Activated CD8-positive, alpha-beta memory T cell treated with anti-CD3 and anti-CD28 coated beads, Interleukin-2, amount 10 ng/mL, durations not matched to agents 7 days and 5 days (primary cell): ENCODE measurements at regions of chr17 and their contacts with region 1.

Region 1: DNA sequence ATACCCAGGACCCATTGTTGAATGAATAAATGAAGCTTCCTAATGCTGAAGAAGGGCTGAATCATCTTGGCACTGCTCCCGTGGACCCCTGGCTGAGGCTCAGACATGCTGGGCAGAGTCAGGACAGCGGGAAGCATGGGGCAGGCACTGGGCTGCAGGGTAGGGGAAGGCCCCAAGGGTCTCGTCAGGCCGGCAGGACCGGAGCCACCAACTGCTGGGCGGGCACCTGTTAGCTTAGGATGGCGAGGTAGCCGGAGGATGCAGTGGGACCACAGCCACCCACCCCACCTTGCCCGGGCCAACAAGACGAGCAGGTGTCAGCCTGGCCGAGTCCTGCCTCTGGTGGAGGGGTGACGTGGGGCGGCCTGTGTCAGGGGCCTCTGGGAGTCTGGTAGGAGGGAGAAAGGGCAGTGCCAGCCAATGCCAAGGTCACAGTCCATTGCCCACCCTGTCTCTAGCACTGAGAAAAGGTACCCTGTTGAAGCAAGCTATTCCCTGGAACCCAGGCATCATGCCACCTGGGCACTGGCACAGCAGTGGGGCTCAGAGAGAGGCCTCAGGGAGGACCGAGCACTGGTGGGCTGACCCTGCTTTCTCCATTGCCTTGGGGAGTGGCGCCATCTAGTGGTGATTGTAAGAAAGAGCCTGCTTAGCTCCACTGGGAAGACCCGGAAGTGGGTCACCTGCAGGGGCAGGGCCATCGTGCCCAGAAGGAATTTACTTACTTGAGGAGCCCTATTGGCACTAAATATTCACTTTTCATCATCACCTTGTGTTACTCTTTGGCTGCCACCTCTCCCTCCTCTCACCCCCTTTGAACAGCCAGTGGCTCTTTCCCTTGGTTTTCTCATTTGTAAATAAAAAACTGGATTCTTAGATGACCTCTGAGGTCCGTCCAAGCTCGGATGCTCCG is 3.0 kb upstream of the DLX3 start:
- DNase-seq: peak; percentile 90
- ATAC-seq: peak; percentile 93
- H3K4me3 Mint-ChIP-seq: no peak overlapping the region
- H3K27ac Mint-ChIP-seq: no peak overlapping the region
- H3K4me1 Mint-ChIP-seq: peaks cover 24% of the 10 kb centered on the region
- H3K27me3 Mint-ChIP-seq: peaks cover 71% of the 10 kb centered on the region

Region 2: GRCh38 chr17:49567871-49568694 is 430.0 kb before region 1 on chr17:
- CTCF ChIA-PET with region 1: interaction called, 52 read pairs
- DNase-seq: peak; percentile 90
- ATAC-seq: peak; percentile 61
- H3K4me3 Mint-ChIP-seq: peak overlapping the region; percentile 63
- H3K27ac Mint-ChIP-seq: no peak overlapping the region
- H3K4me1 Mint-ChIP-seq: peaks cover 38% of the 10 kb centered on the region
- H3K27me3 Mint-ChIP-seq: peaks cover 51% of the 10 kb centered on the region

Region 3: DNA sequence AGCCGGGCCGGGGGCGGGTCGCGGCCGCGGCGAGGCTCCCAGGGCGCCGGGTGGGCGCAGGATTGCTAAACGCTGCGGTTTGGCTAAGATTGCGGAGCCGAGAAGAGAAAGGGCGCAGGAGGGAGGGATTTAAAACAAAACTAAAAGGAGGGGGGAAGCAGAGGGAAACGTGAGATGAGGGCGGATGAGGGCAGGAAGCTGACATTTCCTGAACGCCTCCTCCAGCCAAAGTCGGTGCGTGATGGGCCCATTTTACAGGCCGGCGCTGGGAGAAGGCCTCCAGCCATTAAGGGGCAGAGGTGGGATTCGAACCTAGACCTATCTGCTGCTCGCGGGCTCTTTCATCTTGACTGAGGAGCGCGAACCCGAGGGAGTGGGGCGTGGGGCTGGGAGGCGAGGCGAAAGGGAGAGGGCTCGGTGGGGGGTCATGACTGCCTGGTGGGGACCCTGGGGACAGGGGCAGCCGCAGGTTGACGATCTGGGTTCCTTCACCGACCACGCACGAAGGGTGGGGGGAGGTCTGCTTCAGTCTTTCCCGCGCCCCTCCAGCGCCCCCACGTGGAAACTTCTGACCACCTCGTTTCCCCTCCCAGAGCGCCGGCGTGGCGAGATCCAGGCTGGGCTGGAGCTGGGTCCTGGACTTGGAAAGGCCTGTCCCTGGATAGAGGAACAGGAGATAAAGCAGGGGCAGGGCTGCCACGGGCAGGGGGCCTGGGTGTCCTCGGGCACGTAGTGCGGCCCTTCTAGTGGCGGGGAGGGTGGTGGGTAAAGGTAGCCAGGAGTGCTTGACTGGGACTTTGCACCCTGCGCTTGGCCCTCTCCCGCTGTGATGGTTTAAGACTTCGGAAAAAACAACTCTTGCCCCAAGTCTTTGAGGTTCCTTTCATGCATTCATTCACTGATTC is 146.4 kb before region 1 on chr17:
- CTCF ChIA-PET with region 1: interaction called, 202 read pairs
- DNase-seq: peak; percentile 75
- ATAC-seq: peak; percentile 79
- H3K4me3 Mint-ChIP-seq: peak overlapping the region; percentile 79
- H3K27ac Mint-ChIP-seq: peak overlapping the region; percentile 80
- H3K4me1 Mint-ChIP-seq: peaks cover 13% of the 10 kb centered on the region
- H3K27me3 Mint-ChIP-seq: peaks cover 18% of the 10 kb centered on the region

Region 4: DNA sequence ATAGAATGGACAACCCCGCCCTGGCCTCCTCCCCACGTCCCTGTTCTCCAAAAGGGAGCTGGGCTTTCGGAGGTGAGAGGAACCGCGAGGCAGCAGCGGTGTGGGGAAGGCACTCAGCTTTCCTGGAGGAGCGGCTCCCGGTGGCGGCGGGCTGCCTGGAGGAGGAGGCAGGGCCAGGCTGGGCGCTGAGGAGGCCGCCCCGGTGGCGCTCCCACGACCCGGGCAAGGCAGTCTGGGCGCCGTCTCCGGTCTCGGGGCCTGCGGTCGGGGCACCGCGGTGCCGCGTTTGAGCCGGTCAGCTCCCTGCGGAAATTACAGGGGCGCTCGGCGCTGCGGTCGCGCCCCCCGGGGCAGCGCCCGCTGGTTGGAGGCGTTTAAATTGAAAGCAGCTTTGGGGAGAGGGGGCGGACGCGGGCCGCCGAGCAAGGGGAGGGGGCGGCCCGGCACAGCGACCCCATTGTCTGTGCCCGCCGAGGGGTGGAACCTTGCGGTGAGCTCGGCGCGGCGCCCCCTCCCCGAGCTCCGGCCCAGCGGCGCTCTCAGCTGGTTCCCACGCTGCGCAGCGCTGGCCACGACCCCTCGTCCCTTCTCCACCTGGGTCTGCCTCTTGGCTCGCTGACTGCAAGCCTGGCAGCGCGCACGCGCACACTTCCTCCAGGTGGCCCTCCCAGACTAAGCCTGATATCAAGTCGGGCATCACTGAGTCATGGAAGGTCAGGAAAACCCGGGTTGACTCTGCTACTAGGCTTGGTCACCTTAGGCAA is 87.8 kb before region 1 on chr17:
- CTCF ChIA-PET with region 1: interaction called, 31 read pairs
- DNase-seq: no peak
- ATAC-seq: no peak
- H3K4me3 Mint-ChIP-seq: no peak overlapping the region
- H3K27ac Mint-ChIP-seq: no peak overlapping the region
- H3K4me1 Mint-ChIP-seq: peaks cover 5% of the 10 kb centered on the region
- H3K27me3 Mint-ChIP-seq: peaks cover 73% of the 10 kb centered on the region

Region 5: DNA sequence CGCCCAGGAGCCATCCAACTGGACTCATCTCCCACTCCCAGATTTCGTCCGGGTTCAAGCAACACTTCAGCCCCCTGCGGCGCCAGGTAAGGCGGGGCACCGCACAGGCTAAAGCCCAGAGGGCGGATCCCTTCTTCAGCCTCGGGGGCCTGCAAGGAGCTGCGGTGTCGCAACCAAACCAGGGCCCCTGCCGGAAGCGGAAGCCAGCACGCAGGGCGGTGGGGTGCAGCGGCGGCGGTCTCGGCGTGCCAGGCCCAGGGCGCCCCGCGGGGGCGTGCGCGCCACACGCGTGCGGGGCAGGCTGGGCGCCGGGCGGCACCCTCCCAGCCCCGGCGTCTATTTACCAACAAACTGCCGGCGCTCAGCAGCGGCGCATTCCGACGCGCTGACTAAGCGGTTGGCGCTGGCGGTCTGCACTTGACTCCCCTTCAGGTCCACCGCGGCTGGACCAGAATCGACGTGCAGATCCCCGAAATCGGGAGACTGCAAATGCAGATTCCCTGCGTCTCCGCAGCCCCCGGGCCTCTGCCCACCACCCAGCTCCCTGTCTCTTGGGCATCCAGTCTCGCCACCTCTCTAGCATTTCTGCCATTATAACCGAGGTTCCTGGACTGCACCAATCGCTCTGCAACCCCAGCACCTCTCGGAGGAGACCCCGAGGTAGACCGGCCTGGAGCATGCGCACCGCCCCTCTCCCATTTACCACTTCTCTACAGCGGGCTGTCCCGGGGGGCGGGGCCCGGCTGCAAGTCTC is 29.5 kb before region 1 on chr17:
- CTCF ChIA-PET with region 1: interaction called, 113 read pairs
- DNase-seq: peak; percentile 84
- ATAC-seq: peak; percentile 79
- H3K4me3 Mint-ChIP-seq: peak overlapping the region; percentile 76
- H3K27ac Mint-ChIP-seq: peak overlapping the region; percentile 50
- H3K4me1 Mint-ChIP-seq: peaks cover 34% of the 10 kb centered on the region
- H3K27me3 Mint-ChIP-seq: peaks cover 92% of the 10 kb centered on the region

Region 6: GRCh38 chr17:50055426-50056230 is 57.6 kb after region 1 on chr17 and contains the start of gene ITGA3:
- CTCF ChIA-PET with region 1: interaction called, 14 read pairs
- DNase-seq: peak; percentile 70
- ATAC-seq: peak; percentile 62
- H3K4me3 Mint-ChIP-seq: peak within 1 kb of the TSS; percentile 84
- H3K27ac Mint-ChIP-seq: peak within 1 kb of the TSS; percentile 58
- H3K4me1 Mint-ChIP-seq: peaks cover 37% of the 10 kb centered on the region
- H3K27me3 Mint-ChIP-seq: peaks cover 7% of the 10 kb centered on the region
- total RNA-seq, gene ITGA3: 10.3 to 11.3 TPM